H1 (cell line): ENCODE measurements at regions of chr10 and their contacts with region 1.

Region 1: GRCh38 chr10:61024856-61025600 is 81.0 kb upstream of the RHOBTB1 start:
- DNase-seq: no peak
- H3K4me3 ChIP-seq: no peak overlapping the region
- H3K27ac ChIP-seq: no peak overlapping the region
- H3K4me1 ChIP-seq: no peaks in the 10 kb centered on the region
- H3K27me3 ChIP-seq: peaks cover 0 to 1% (median 0%) of the 10 kb centered on the region in 4 experiments; a peak in 1 of 7 replicates
- CTCF ChIP-seq: peak; percentile 55 to 70 (median 70)
- EP300 ChIP-seq: no peak
- POLR2A ChIP-seq: no peak
- RAD21 ChIP-seq: peak; percentile 49 to 67; a peak in 3 of 4 replicates

Region 2: DNA sequence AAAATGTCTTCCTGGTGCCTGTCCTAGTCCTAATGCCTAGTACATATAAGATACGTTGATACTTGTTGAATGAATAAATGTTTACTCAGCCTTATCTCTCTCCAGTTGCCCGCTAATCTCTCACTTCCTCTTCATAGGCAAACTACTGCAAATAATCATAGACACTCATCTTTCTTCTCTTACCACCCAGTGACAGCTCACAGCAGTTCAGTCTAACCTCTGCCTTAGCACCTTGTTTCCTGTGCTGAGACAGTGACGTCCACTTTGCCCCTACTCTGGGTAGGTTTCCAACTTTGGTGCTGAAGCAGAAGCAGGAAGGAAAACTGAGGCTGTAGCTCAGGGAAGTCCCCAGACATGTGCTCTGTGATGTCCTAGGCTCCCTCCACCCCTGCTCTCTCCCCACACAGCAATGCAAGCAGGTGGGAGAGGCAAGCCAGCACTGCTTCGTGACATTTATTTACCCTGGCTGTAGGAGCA is 35.6 kb before region 1 on chr10:
- CTCF ChIA-PET with region 1: no interaction called
- POLR2A ChIA-PET with region 1: no interaction called
- DNase-seq: no peak
- H3K4me3 ChIP-seq: no peak overlapping the region
- H3K27ac ChIP-seq: no peak overlapping the region
- H3K4me1 ChIP-seq: no peaks in the 10 kb centered on the region
- H3K27me3 ChIP-seq: no peaks in the 10 kb centered on the region
- CTCF ChIP-seq: no peak
- EP300 ChIP-seq: no peak
- POLR2A ChIP-seq: no peak
- RAD21 ChIP-seq: no peak

Region 3: DNA sequence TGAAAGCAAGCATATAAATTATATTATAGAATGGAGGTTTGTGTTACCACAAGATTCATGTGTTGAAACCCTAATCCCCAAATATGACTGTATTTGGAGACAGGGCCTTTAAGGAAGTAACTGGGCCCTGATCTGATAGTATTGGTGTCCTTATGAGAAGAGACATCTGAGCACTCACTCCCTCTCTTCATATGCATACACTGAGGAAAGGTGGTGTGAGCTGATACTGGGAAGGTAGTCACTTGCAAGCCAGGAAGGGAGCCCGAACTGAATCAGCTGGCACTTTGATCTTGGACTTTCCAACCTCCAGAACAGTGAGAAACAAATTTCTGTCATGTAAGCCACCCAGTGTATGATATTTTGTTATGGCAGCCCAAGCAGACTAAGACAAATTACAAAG is 14.2 kb before region 1 on chr10:
- CTCF ChIA-PET with region 1: interaction called, 12 read pairs
- POLR2A ChIA-PET with region 1: no interaction called
- DNase-seq: no peak
- H3K4me3 ChIP-seq: no peak overlapping the region
- H3K27ac ChIP-seq: no peak overlapping the region
- H3K4me1 ChIP-seq: no peaks in the 10 kb centered on the region
- H3K27me3 ChIP-seq: no peaks in the 10 kb centered on the region
- CTCF ChIP-seq: no peak
- EP300 ChIP-seq: no peak
- POLR2A ChIP-seq: no peak
- RAD21 ChIP-seq: no peak

Region 4: GRCh38 chr10:61040399-61041016 is 15.5 kb after region 1 on chr10:
- CTCF ChIA-PET with region 1: interaction called, 24 read pairs
- POLR2A ChIA-PET with region 1: no interaction called
- DNase-seq: no peak
- H3K4me3 ChIP-seq: no peak overlapping the region
- H3K27ac ChIP-seq: no peak overlapping the region
- H3K4me1 ChIP-seq: peaks cover 0 to 7% (median 4%) of the 10 kb centered on the region in 4 experiments; a peak in 4 of 7 replicates
- H3K27me3 ChIP-seq: no peaks in the 10 kb centered on the region
- CTCF ChIP-seq: no peak
- EP300 ChIP-seq: no peak
- POLR2A ChIP-seq: no peak
- RAD21 ChIP-seq: no peak

Region 5: DNA sequence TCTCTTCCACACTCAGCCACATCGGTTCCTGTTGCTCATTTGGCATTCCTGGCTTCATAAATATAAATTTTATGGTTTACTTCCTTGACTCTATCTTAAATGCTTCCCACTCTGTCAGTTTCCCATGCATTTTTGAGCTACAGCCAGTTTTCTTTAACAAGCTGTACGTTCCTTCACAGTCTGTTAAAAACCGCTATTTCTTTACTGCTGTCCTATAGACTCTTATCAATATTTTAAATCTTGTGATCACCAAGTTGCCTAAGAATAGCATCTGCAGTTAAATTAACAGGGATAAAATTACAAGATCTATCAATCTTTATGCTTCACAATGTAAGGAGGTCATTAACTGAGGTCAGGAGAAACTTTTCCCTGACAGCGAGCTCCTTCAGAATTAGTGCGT is 22.1 kb after region 1 on chr10:
- CTCF ChIA-PET with region 1: interaction called, 24 read pairs
- POLR2A ChIA-PET with region 1: no interaction called
- DNase-seq: no peak
- H3K4me3 ChIP-seq: no peak overlapping the region
- H3K27ac ChIP-seq: no peak overlapping the region
- H3K4me1 ChIP-seq: no peaks in the 10 kb centered on the region; a peak in 2 of 7 replicates
- H3K27me3 ChIP-seq: no peaks in the 10 kb centered on the region
- CTCF ChIP-seq: no peak
- EP300 ChIP-seq: no peak
- POLR2A ChIP-seq: no peak
- RAD21 ChIP-seq: no peak

Region 6: DNA sequence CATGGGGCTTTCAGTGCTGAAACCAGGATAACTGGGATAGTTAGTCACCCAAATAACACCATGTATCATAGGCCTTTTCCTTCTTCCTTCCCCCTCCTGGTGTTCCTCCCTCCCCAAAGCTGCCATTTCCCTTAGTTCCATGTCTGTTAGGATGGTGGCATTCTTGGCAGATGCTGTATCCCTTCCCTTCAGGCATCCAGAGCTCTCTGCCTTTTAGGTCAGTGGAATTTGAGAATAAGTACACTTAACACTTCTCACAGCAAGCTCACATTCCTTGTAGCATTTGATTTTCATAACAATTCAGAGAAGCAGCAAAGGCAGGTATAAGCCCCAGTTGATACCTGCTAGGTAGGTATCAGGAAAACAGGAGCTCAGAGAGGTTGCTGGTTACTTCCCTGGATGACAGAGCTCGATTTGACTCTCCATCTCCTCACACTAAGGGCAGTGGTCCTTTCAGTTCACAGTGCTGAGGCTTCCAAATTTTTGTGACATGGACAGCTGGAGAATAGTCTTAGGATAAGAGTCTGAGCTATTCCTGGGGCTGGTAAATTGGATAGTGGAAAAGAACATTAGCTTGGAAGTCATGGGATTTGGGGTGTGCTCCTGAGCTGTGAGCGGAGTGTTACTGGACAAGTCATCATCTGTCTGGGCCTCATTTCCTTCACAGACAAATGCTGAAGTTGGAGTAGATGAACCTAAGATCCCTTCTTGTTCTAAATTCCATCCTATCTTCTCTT is 27.6 kb after region 1 on chr10:
- CTCF ChIA-PET with region 1: interaction called, 24 read pairs
- POLR2A ChIA-PET with region 1: no interaction called
- DNase-seq: peak in 1 of 2 experiments; percentile 33
- H3K4me3 ChIP-seq: no peak overlapping the region
- H3K27ac ChIP-seq: no peak overlapping the region
- H3K4me1 ChIP-seq: peaks cover 0 to 9% (median 1%) of the 10 kb centered on the region in 4 experiments; a peak in 2 of 7 replicates
- H3K27me3 ChIP-seq: no peaks in the 10 kb centered on the region
- CTCF ChIP-seq: no peak
- EP300 ChIP-seq: no peak; a peak in 1 of 3 replicates
- POLR2A ChIP-seq: no peak
- RAD21 ChIP-seq: no peak